Adrenal gland (tissue), 19 donors: ENCODE measurements at regions of chr12 and their contacts with region 1.

Region 1: DNA sequence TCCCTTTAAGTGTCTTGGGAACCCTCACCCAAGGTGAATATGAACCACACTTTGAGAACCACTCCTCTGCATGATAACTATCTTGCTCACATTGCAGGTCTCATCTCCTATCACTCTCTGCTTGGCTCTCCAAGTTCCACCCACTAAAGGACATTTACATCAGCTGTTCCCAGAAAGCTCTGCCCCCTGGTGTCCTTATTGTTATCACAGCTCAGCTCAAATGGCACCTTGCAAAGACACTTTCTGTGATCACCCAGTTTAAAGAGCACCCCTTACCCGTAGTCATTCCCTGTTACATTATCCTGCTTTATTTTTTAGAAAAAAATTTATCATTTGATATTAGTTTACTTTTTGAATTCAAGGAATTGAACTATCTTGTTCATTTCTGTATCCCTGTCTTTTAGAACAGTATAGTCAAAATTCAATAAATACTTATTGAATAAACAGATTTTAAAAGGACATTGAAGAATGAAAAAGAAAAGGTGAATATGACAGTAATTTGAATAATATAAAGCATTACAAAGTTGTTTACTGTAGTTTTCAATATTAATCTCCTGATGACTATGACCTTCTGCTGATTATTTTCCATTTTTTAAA is 20.5 kb upstream of the GUCY2C start:
- DNase-seq: peak; percentile 23 to 64 (median 44)
- H3K4me3 ChIP-seq: no peak overlapping the region
- H3K27ac ChIP-seq: no peak overlapping the region
- H3K4me1 ChIP-seq: no peaks in the 10 kb centered on the region
- H3K27me3 ChIP-seq: no peaks in the 10 kb centered on the region
- CTCF ChIP-seq: peak; percentile 24 to 60 (median 57)
- POLR2A ChIP-seq: no peak

Region 2: DNA sequence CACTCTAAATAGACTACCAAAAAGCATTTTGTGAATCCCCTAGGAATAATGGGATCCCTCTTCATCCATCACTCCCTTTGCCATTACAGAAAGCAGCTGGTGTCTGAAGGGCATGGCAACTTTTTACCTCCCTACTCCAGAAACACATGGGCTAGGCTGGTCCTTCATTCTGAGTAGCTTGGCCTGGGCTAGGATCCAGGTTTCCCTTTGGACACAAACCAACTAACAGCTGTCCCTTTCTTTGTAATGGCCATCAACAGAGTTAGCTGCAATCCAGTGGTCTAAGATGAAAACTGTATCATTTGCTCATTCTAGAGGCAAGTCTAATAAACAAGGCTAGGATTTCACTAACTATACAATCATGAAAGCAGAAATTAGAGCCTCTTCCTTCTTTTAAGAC is 743.0 kb before region 1 on chr12:
- intact Hi-C with region 1: no loop called
- DNase-seq: no peak
- H3K4me3 ChIP-seq: no peak overlapping the region
- H3K27ac ChIP-seq: no peak overlapping the region
- H3K4me1 ChIP-seq: no peaks in the 10 kb centered on the region
- H3K27me3 ChIP-seq: peaks cover 3% of the 10 kb centered on the region
- CTCF ChIP-seq: no peak
- POLR2A ChIP-seq: no peak

Region 3: DNA sequence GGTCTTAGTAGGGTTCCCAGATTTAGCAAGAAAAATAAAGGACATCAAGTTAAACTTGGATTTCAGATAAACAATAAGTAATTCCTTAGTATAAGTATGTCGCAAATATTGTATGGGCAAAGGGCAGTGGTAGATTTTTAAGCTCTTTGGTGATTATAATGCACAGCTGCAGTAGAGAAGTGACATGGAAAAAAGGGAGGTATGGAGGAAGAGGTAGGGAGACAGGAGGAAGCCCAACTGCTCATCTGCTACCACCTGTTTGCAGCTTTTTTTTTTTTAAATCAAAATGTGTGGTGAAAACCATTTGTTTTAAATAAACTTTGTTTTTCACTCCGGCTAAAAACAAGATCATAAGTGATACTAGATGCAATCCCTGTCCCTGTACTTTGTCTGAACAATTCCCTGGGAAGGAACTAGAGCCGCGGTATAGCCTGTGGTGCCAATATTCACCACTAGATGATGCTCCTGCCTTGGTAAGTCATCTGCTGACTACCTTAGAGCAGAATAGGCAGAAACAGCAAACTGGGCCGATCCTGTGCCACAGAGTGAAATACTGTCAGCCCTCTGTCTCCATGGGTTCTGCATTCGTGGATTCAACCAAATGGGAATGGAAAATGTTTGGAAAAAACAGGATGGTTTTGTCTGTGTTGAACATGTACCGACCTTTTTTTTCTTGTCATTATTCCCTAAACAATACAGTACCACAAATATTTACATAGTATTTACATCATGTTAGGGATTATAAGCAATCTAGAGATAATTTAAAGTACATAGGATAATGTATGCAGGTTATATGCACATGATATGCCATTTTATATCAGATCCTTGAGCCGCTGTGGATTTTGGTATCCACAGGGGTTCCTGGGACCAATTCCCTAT is 86.9 kb before region 1 on chr12:
- intact Hi-C with region 1: loop called in 1 of 2 experiments (anchors 10 kb)
- DNase-seq: peak; percentile 67 to 93 (median 76)
- H3K4me3 ChIP-seq: no peak overlapping the region
- H3K27ac ChIP-seq: no peak overlapping the region
- H3K4me1 ChIP-seq: no peaks in the 10 kb centered on the region
- H3K27me3 ChIP-seq: no peaks in the 10 kb centered on the region
- CTCF ChIP-seq: peak; percentile 88 to 99 (median 97)
- POLR2A ChIP-seq: no peak